ENCODE measurements at regions of chr3 and their contacts with region 1.

Region 1: GRCh38 chr3:126389112-126389793 is 5.5 kb upstream of the CFAP100 start:
- DNase-seq: peak; percentile 93
- H3K4me3 ChIP-seq: peak overlapping the region; percentile 28 to 39; a peak in 3 of 4 replicates
- H3K27ac ChIP-seq: no peak overlapping the region
- H3K4me1 ChIP-seq: peaks cover 0 to 25% of the 10 kb centered on the region in 2 experiments; a peak in 2 of 4 replicates
- H3K27me3 ChIP-seq: no peaks in the 10 kb centered on the region
- CTCF ChIP-seq: peak; percentile 74
- EP300 ChIP-seq: no peak
- RAD21 ChIP-seq: peak; percentile 85

Region 2: GRCh38 chr3:126245811-126246727 is 143.2 kb before region 1 on chr3:
- CTCF ChIA-PET with region 1: interaction called, 36 read pairs
- POLR2A ChIA-PET with region 1: no interaction called
- DNase-seq: peak; percentile 59
- H3K4me3 ChIP-seq: no peak overlapping the region
- H3K27ac ChIP-seq: no peak overlapping the region
- H3K4me1 ChIP-seq: no peaks in the 10 kb centered on the region; a peak in 1 of 4 replicates
- H3K27me3 ChIP-seq: no peaks in the 10 kb centered on the region; the same call in 1 of the 2 replicates
- CTCF ChIP-seq: peak; percentile 57
- EP300 ChIP-seq: no peak
- RAD21 ChIP-seq: peak; percentile 60

Region 3: DNA sequence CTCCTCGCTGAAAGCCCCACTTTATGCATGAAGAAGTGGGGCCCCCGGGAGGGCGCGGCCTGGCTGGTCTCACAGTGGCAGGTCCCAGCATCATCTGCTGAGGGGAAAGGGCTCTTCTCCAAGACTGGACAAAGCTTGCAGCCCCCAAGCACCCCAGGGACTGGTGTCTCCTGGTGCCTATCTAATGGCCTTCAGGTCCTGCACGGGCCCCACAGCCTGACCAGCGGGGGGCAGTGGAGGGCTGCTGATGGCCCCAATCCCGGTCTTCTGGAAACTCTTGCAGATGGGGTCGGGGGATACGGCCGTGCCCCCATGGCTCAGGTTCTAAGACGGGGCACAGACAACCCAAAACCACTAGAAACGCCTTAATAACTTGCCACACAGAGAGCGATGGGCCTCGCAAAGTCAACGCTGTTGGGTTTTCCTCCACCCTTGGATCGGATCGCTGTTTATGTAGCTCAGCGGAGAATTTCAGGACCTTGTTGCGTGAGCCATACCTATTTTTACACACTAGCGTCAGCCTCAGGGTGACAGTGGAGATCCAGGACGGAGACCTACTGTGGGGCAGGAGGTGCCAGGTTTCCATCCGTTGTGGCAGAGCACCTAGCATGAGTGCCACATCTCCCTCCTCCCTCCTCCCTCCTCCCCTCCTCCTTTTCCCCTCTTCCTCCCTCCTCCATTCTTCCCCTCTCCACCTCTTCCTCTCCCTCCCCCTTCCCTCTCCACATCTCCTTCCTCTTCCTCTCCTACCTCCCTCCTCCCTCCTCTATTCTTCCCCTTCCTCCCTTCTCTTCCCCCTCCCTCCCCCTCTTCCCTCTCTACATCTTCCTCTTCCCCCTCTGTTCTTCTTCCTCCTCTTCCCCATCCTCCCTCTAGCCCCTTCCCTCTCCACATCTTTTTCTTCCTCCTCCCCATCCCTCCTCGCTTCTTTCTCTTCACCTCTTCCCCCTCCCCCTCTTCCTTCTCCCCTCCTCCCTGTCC is 129.6 kb before region 1 on chr3:
- CTCF ChIA-PET with region 1: interaction called, 10 read pairs
- POLR2A ChIA-PET with region 1: no interaction called
- DNase-seq: peak; percentile 79
- H3K4me3 ChIP-seq: no peak overlapping the region
- H3K27ac ChIP-seq: no peak overlapping the region
- H3K4me1 ChIP-seq: peaks cover 3 to 4% of the 10 kb centered on the region in 2 experiments; a peak in 2 of 4 replicates
- H3K27me3 ChIP-seq: no peaks in the 10 kb centered on the region
- CTCF ChIP-seq: peak; percentile 45
- EP300 ChIP-seq: no peak
- RAD21 ChIP-seq: peak; percentile 73

Region 4: DNA sequence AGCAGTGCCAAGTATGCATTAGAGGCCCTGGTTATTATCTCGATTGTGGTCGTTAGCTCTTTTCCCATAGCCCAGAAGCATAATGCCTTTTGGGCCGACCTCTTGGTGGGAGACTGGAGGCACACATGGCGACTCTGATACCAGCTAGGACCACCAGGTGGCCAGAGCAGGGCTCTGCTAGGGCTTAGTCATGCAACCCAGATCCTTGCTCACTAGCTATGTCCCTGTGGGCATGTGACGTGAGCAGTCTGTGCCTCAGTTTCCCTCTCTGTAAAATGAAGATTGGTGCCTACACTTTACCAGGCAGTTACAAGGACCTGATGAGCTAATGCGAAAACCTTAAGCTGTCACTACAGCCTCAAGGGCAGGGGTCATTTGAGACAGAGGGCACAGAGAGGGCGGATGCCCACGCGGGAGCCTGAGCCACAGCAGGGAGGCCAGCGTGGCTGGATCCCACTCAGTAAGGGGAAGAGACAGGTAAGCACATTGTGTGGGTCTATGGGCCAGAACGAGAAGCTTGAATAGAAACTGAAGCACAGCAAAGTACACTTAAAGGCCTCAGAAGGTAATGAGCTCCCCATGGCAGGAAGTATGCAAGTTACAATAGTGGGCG is 40.8 kb before region 1 on chr3:
- CTCF ChIA-PET with region 1: interaction called, 13 read pairs
- POLR2A ChIA-PET with region 1: no interaction called
- DNase-seq: peak; percentile 49
- H3K4me3 ChIP-seq: no peak overlapping the region
- H3K27ac ChIP-seq: no peak overlapping the region
- H3K4me1 ChIP-seq: no peaks in the 10 kb centered on the region; a peak in 1 of 4 replicates
- H3K27me3 ChIP-seq: no peaks in the 10 kb centered on the region
- CTCF ChIP-seq: no peak
- EP300 ChIP-seq: no peak
- RAD21 ChIP-seq: no peak

Region 5: DNA sequence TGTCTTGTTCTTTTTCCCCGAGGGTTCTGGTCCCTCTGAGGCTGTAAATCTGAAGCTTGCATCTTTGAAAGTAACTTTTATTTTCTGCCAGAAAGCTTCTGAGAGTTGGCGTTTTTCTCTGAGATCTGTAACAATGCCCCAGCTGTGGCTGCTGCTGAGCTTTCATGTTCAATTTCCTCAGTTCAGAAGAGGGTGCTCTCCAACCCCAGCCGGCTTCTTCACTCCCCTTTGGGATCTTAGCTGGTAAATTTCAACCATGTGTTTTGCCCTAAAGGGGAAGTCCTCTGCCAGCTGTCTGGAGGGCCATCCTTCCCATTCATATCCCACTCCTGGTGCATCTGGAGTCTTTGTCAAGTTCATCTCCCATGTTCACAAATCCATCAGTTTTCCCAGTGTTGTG is 12.8 kb before region 1 on chr3:
- CTCF ChIA-PET with region 1: interaction called, 30 read pairs
- POLR2A ChIA-PET with region 1: no interaction called
- DNase-seq: no peak
- H3K4me3 ChIP-seq: no peak overlapping the region
- H3K27ac ChIP-seq: no peak overlapping the region; a peak in 1 of 4 replicates
- H3K4me1 ChIP-seq: peaks cover 0 to 21% of the 10 kb centered on the region in 2 experiments; a peak in 1 of 4 replicates
- H3K27me3 ChIP-seq: peaks cover 8% of the 10 kb centered on the region; the same call in 1 of the 2 replicates
- CTCF ChIP-seq: no peak
- EP300 ChIP-seq: no peak
- RAD21 ChIP-seq: no peak

Region 6: GRCh38 chr3:126415661-126416591 is 26.7 kb after region 1 on chr3:
- CTCF ChIA-PET with region 1: interaction called, 13 read pairs
- POLR2A ChIA-PET with region 1: no interaction called
- DNase-seq: no peak
- H3K4me3 ChIP-seq: no peak overlapping the region
- H3K27ac ChIP-seq: no peak overlapping the region
- H3K4me1 ChIP-seq: no peaks in the 10 kb centered on the region
- H3K27me3 ChIP-seq: no peaks in the 10 kb centered on the region
- CTCF ChIP-seq: no peak
- EP300 ChIP-seq: no peak
- RAD21 ChIP-seq: no peak

Region 7: GRCh38 chr3:126475413-126476114 is 86.3 kb after region 1 on chr3 and contains the start of gene ZXDC:
- CTCF ChIA-PET with region 1: interaction called, 16 read pairs
- POLR2A ChIA-PET with region 1: no interaction called
- DNase-seq: peak; percentile 100
- H3K4me3 ChIP-seq: peak within 1 kb of the TSS; percentile 84 to 88
- H3K27ac ChIP-seq: peak within 1 kb of the TSS; percentile 38 to 91; a peak in 3 of 4 replicates
- H3K4me1 ChIP-seq: peaks cover 20 to 41% of the 10 kb centered on the region in 2 experiments
- H3K27me3 ChIP-seq: no peaks in the 10 kb centered on the region
- CTCF ChIP-seq: peak; percentile 21; the same call in 1 of the 2 replicates
- EP300 ChIP-seq: no peak
- RAD21 ChIP-seq: peak; percentile 51
- polyA plus RNA-seq, gene ZXDC: 8.5 and 9.1 TPM in 2 replicates

Region 8: GRCh38 chr3:126512026-126512425 is 122.8 kb after region 1 on chr3:
- CTCF ChIA-PET with region 1: no interaction called
- POLR2A ChIA-PET with region 1: no interaction called
- DNase-seq: no peak
- H3K4me3 ChIP-seq: no peak overlapping the region
- H3K27ac ChIP-seq: no peak overlapping the region
- H3K4me1 ChIP-seq: peaks cover 0 to 4% of the 10 kb centered on the region in 2 experiments; a peak in 1 of 4 replicates
- H3K27me3 ChIP-seq: peaks cover 1% of the 10 kb centered on the region; the same call in 1 of the 2 replicates
- CTCF ChIP-seq: no peak
- EP300 ChIP-seq: no peak
- RAD21 ChIP-seq: no peak

Region 9: DNA sequence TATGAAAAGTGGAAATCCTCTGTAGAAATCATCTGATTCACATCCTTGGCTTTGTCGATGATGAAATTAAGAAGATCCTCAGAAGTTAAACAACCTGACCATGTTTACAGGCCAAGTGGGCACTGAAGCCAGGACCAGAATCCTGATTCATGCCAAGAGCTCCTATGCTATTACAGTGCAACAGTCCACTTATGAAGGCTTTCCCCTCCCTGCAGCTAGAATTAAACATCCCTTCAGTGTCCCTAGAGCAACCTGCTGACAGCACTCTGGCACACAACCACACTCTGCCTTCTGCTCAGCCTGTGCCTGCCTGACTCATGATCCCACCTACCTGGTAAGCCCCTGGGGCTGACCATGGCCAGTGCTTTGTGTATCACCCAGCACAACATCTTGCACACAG is 231.9 kb after region 1 on chr3:
- CTCF ChIA-PET with region 1: no interaction called
- POLR2A ChIA-PET with region 1: no interaction called
- DNase-seq: no peak
- H3K4me3 ChIP-seq: 0 out of 4 replicates have a peak overlapping the region, but pooled peaks of 1 of the 2 experiments have one; percentile 21
- H3K27ac ChIP-seq: peak overlapping the region; percentile 76 to 91; a peak in 3 of 4 replicates
- H3K4me1 ChIP-seq: peaks cover 3 to 27% of the 10 kb centered on the region in 2 experiments; a peak in 3 of 4 replicates
- H3K27me3 ChIP-seq: no peaks in the 10 kb centered on the region
- CTCF ChIP-seq: no peak
- EP300 ChIP-seq: peak in 1 of 2 experiments; percentile 39; a peak in 1 of 4 replicates
- RAD21 ChIP-seq: no peak

Measured in SK-N-SH (cell line).